ENCODE measurements at regions of chr20 and their contacts with region 1.

Region 1: GRCh38 chr20:3820048-3820900 is at the start of gene AP5S1:
- DNase-seq: no peak
- H3K4me3 ChIP-seq: peak within 1 kb of the TSS; percentile 89
- H3K27ac ChIP-seq: peak within 1 kb of the TSS; percentile 97
- H3K27me3 ChIP-seq: no peaks in the 10 kb centered on the region
- CTCF ChIP-seq: peak; percentile 78
- polyA plus RNA-seq, gene AP5S1: 7.8 and 11.7 TPM in 2 replicates

Region 2: GRCh38 chr20:3716195-3716834 is 104.0 kb before region 1 on chr20:
- CTCF ChIA-PET with region 1: interaction called, 10 read pairs
- POLR2A ChIA-PET with region 1: no interaction called
- DNase-seq: no peak
- H3K4me3 ChIP-seq: no peak overlapping the region
- H3K27ac ChIP-seq: no peak overlapping the region
- H3K27me3 ChIP-seq: peaks cover 9% of the 10 kb centered on the region
- CTCF ChIP-seq: peak; percentile 87

Region 3: GRCh38 chr20:3781153-3781910 is 38.9 kb before region 1 on chr20 and contains the start of gene SPEF1:
- CTCF ChIA-PET with region 1: interaction called, 87 read pairs
- POLR2A ChIA-PET with region 1: interaction called, 19 read pairs
- DNase-seq: peak; percentile 71
- H3K4me3 ChIP-seq: peak within 1 kb of the TSS; percentile 56
- H3K27ac ChIP-seq: peak within 1 kb of the TSS; percentile 11
- H3K27me3 ChIP-seq: peaks cover 7% of the 10 kb centered on the region
- CTCF ChIP-seq: peak; percentile 50
- polyA plus RNA-seq, gene SPEF1: 0.12 TPM in 2 replicates

Region 4: GRCh38 chr20:3795511-3796468 is 24.5 kb before region 1 on chr20 and contains the start of gene CDC25B:
- CTCF ChIA-PET with region 1: interaction called, 87 read pairs
- POLR2A ChIA-PET with region 1: interaction called, 10 read pairs
- DNase-seq: peak; percentile 68
- H3K4me3 ChIP-seq: peak within 1 kb of the TSS; percentile 82
- H3K27ac ChIP-seq: peak within 1 kb of the TSS; percentile 97
- H3K27me3 ChIP-seq: no peaks in the 10 kb centered on the region
- CTCF ChIP-seq: peak; percentile 52
- polyA plus RNA-seq, gene CDC25B: 57.3 and 58.9 TPM in 2 replicates